PC-3 (cell line): ENCODE measurements at regions of chr15 and their contacts with region 1.

Region 1: GRCh38 chr15:60179786-60180391 is 175.8 kb downstream of the FOXB1 start:
- DNase-seq: peak; percentile 65
- ATAC-seq: peak; percentile 48; the same call in 1 of the 2 replicates
- H3K4me3 ChIP-seq: no peak overlapping the region
- H3K27ac ChIP-seq: no peak overlapping the region
- H3K4me1 ChIP-seq: no peaks in the 10 kb centered on the region
- H3K27me3 ChIP-seq: peaks cover 55% of the 10 kb centered on the region
- CTCF ChIP-seq: peak; percentile 83

Region 2: GRCh38 chr15:59997070-59997701 is 182.7 kb before region 1 on chr15:
- CTCF ChIA-PET with region 1: no interaction called
- POLR2A ChIA-PET with region 1: no interaction called
- intact Hi-C with region 1: loop called (anchors 5 kb)
- DNase-seq: peak; percentile 42
- ATAC-seq: peak; percentile 56
- H3K4me3 ChIP-seq: peak overlapping the region; percentile 59
- H3K27ac ChIP-seq: no peak overlapping the region
- H3K4me1 ChIP-seq: peaks cover 5% of the 10 kb centered on the region; the same call in 1 of the 2 replicates
- H3K27me3 ChIP-seq: peaks cover 91% of the 10 kb centered on the region
- CTCF ChIP-seq: peak; percentile 26; the same call in 1 of the 2 replicates

Region 3: DNA sequence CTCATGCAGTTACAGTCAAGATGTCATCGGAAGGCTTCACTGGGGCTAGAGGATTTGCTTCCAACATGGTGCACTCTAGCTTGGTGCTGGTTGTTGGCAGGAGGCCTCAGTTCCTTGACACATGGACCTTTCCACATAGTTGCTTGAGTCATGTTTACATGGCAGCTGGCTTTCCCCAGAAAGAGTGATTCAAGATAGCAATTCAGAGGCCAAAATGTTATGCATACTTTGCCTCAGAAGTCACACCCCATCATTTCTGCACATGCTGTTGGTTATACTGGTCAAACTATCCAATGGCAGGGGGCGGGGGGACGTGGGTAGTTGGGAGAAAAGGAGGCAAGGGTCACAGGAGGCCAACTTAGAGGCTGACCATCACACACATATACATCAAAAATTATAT is 117.1 kb before region 1 on chr15:
- CTCF ChIA-PET with region 1: no interaction called
- POLR2A ChIA-PET with region 1: no interaction called
- intact Hi-C with region 1: no loop called
- DNase-seq: no peak
- ATAC-seq: no peak
- H3K4me3 ChIP-seq: no peak overlapping the region
- H3K27ac ChIP-seq: no peak overlapping the region
- H3K4me1 ChIP-seq: no peaks in the 10 kb centered on the region
- H3K27me3 ChIP-seq: no peaks in the 10 kb centered on the region
- CTCF ChIP-seq: no peak

Region 4: GRCh38 chr15:60152386-60152785 is 27.5 kb before region 1 on chr15:
- CTCF ChIA-PET with region 1: no interaction called
- POLR2A ChIA-PET with region 1: no interaction called
- intact Hi-C with region 1: no loop called
- DNase-seq: no peak
- ATAC-seq: no peak
- H3K4me3 ChIP-seq: no peak overlapping the region
- H3K27ac ChIP-seq: no peak overlapping the region
- H3K4me1 ChIP-seq: no peaks in the 10 kb centered on the region
- H3K27me3 ChIP-seq: peaks cover 79% of the 10 kb centered on the region
- CTCF ChIP-seq: no peak